ENCODE measurements at regions of chr7 and their contacts with region 1.

Region 1: GRCh38 chr7:4753711-4754432 is 21.6 kb upstream of the AP5Z1 start:
- DNase-seq: peak; percentile 61 to 98 (median 81)
- ATAC-seq: peak; percentile 72 to 90 (median 88)
- H3K4me3 ChIP-seq: no peak overlapping the region
- H3K27ac ChIP-seq: no peak overlapping the region
- H3K4me1 ChIP-seq: peaks cover 0 to 7% (median 3%) of the 10 kb centered on the region in 3 donors
- H3K27me3 ChIP-seq: no peaks in the 10 kb centered on the region
- CTCF ChIP-seq: peak; percentile 75 to 86 (median 78)

Region 2: DNA sequence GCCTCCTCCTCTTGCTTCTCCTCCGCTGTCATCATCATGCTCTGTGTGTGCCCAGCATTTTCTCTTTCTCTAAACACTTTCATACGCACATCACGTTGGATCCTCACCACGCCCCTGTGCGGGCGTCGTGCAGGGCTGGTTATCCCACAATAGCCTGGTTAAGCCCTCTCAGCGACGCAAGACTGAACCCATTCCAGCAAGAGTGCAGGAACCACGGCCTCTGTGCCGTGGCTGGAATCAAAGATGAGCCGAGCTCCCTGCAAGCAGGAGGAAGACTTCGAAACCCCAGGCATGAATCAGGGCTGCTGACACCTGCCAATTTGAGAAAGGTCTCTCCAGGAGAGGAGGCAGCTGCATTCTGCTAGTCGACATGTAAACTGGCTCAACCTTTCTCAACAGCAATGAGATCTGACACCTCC is 146.6 kb before region 1 on chr7:
- intact Hi-C with region 1: loop called in 1 of 3 experiments (anchors 10 kb)
- DNase-seq: peak in 1 of 6 donors; percentile 45
- ATAC-seq: peak in 1 of 4 donors; percentile 16
- H3K4me3 ChIP-seq: no peak overlapping the region
- H3K27ac ChIP-seq: no peak overlapping the region
- H3K4me1 ChIP-seq: no peaks in the 10 kb centered on the region
- H3K27me3 ChIP-seq: no peaks in the 10 kb centered on the region
- CTCF ChIP-seq: no peak

Measured in pancreas (tissue), 10 donors.